Activated T-helper 1 cell treated with anti-CD3 and anti-CD28 coated beads, Interleukin-12 subunit alpha, Interleukin-12 subunit beta, Interleukin-2, Interleukin-4 antibody, amounts not matched to agents 30 ng/mL and 10 ng/mL and 1 ng/mL, durations not matched to agents 14 hours and 24 hours and 36 hours (primary cell): ENCODE measurements at regions of chr17 and their contacts with region 1.

Region 1: DNA sequence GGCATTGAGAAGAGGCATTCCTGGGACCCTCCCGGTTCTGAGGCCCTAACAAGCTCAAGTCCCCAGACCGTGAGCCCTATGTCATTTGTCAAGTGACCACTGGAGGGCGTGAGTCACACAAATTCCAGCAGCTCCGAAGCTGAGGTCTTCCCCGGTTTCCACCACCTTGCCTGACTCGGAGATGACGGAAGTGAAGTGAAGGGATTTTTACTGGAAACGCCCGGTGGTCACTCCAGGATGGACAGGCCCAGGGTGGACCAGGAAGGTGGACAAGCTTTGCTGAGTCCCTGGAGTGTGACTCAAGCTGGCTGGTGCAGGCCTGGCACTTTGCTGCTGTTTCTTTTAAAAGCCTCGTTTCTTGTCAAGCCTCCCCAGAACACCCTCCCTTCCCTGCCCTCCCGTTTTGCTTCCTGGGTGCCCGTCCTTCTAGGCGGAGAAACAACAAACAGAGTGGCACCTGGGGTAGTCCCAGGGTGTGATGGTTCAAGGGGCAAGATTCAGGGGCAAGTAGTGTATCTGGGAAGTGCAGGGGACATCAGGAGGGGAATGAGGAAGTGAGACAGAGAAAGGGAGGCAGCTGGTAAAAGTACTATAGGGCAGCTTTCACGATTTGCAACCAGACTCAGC is 5.3 kb upstream of the NOS2 start:
- DNase-seq: peak; percentile 76
- H3K4me3 Mint-ChIP-seq: peak overlapping the region; percentile 65
- H3K27ac Mint-ChIP-seq: peak overlapping the region; percentile 91
- H3K4me1 Mint-ChIP-seq: peaks cover 40% of the 10 kb centered on the region
- H3K27me3 Mint-ChIP-seq: peaks cover 5% of the 10 kb centered on the region

Region 2: GRCh38 chr17:27236717-27237315 is 568.8 kb before region 1 on chr17:
- intact Hi-C with region 1: loop called (anchors 5 kb)
- DNase-seq: peak; percentile 51
- H3K4me3 Mint-ChIP-seq: no peak overlapping the region
- H3K27ac Mint-ChIP-seq: no peak overlapping the region
- H3K4me1 Mint-ChIP-seq: peaks cover 21% of the 10 kb centered on the region
- H3K27me3 Mint-ChIP-seq: peaks cover 22% of the 10 kb centered on the region

Region 3: DNA sequence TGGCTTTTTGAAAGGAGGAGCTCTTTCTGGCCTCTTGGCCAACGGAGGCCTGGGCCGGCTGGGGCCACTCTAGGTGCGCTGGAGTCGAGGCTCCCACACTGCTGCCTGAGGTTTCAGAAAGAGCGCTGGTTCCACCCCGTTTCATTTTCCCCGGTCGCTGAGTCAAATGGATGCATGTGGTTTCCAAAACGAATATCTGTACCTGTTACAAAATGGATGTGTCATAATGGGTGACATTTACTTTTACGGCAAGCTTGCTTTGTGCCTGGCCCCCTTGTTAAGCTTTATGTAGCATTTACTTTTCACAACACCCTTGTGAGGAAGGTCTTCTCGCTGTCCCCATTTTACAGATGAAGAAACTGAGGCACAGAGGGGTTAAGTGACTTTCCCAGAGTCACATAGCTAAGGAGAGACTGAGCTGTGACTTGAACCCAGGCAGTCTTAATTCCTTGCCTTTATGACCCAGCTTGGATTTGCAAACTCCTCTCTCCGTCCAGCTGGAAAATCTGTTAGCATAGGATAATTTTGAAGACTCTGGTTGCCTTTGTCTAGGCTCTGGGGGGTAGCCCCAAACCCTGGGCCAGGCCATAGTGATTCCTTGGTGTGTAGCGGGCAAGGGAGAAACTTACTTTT is 338.8 kb before region 1 on chr17:
- intact Hi-C with region 1: loop called (anchors 1 kb)
- DNase-seq: peak; percentile 74
- H3K4me3 Mint-ChIP-seq: peak overlapping the region; percentile 79
- H3K27ac Mint-ChIP-seq: peak overlapping the region; percentile 97
- H3K4me1 Mint-ChIP-seq: peaks cover 88% of the 10 kb centered on the region
- H3K27me3 Mint-ChIP-seq: no peaks in the 10 kb centered on the region

Region 4: GRCh38 chr17:27649929-27650328 is 155.7 kb before region 1 on chr17:
- intact Hi-C with region 1: no loop called
- DNase-seq: no peak
- H3K4me3 Mint-ChIP-seq: no peak overlapping the region
- H3K27ac Mint-ChIP-seq: no peak overlapping the region
- H3K4me1 Mint-ChIP-seq: peaks cover 16% of the 10 kb centered on the region
- H3K27me3 Mint-ChIP-seq: no peaks in the 10 kb centered on the region

Region 5: DNA sequence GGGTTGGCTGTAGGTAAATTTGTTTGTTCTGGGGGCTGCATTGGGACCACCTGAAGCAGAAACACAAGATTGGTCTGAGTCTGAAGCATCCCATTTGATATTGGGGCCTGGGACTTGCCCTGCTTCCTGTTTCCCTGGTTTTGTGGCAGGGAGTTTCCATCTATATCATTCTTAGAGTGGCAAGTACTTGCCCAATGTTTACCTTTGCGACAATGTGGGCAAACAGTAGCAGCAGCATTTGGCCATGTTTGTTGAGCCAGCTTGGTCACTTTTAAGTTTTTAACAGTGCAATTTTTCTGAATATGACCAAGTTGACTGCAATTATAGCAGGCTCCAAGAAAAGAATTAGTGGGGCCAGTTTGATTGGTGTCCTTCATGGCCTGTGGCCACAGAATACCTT is 112.9 kb before region 1 on chr17:
- intact Hi-C with region 1: no loop called
- DNase-seq: no peak
- H3K4me3 Mint-ChIP-seq: no peak overlapping the region
- H3K27ac Mint-ChIP-seq: no peak overlapping the region
- H3K4me1 Mint-ChIP-seq: no peaks in the 10 kb centered on the region
- H3K27me3 Mint-ChIP-seq: peaks cover 4% of the 10 kb centered on the region

Region 6: GRCh38 chr17:27834571-27834970 is 28.9 kb after region 1 on chr17:
- intact Hi-C with region 1: no loop called
- DNase-seq: no peak
- H3K4me3 Mint-ChIP-seq: no peak overlapping the region
- H3K27ac Mint-ChIP-seq: no peak overlapping the region
- H3K4me1 Mint-ChIP-seq: no peaks in the 10 kb centered on the region
- H3K27me3 Mint-ChIP-seq: peaks cover 4% of the 10 kb centered on the region

Region 7: GRCh38 chr17:27846042-27846655 is 40.5 kb after region 1 on chr17:
- intact Hi-C with region 1: loop called (anchors 2 kb)
- DNase-seq: peak; percentile 16
- H3K4me3 Mint-ChIP-seq: peak overlapping the region; percentile 79
- H3K27ac Mint-ChIP-seq: peak overlapping the region; percentile 86
- H3K4me1 Mint-ChIP-seq: peaks cover 30% of the 10 kb centered on the region
- H3K27me3 Mint-ChIP-seq: peaks cover 11% of the 10 kb centered on the region

Region 8: GRCh38 chr17:27892866-27893769 is 87.5 kb after region 1 on chr17 and contains the start of gene LYRM9:
- intact Hi-C with region 1: loop called (anchors 1 kb)
- DNase-seq: peak; percentile 92
- H3K4me3 Mint-ChIP-seq: peak within 1 kb of the TSS; percentile 85
- H3K27ac Mint-ChIP-seq: peak within 1 kb of the TSS; percentile 85
- H3K4me1 Mint-ChIP-seq: peaks cover 29% of the 10 kb centered on the region
- H3K27me3 Mint-ChIP-seq: peaks cover 40% of the 10 kb centered on the region
- total RNA-seq, gene LYRM9: 1.9 and 2.9 TPM in 2 replicates

Region 9: GRCh38 chr17:28053044-28053670 is 247.5 kb after region 1 on chr17:
- intact Hi-C with region 1: no loop called
- DNase-seq: no peak
- H3K4me3 Mint-ChIP-seq: no peak overlapping the region
- H3K27ac Mint-ChIP-seq: no peak overlapping the region
- H3K4me1 Mint-ChIP-seq: peaks cover 42% of the 10 kb centered on the region
- H3K27me3 Mint-ChIP-seq: no peaks in the 10 kb centered on the region

Region 10: DNA sequence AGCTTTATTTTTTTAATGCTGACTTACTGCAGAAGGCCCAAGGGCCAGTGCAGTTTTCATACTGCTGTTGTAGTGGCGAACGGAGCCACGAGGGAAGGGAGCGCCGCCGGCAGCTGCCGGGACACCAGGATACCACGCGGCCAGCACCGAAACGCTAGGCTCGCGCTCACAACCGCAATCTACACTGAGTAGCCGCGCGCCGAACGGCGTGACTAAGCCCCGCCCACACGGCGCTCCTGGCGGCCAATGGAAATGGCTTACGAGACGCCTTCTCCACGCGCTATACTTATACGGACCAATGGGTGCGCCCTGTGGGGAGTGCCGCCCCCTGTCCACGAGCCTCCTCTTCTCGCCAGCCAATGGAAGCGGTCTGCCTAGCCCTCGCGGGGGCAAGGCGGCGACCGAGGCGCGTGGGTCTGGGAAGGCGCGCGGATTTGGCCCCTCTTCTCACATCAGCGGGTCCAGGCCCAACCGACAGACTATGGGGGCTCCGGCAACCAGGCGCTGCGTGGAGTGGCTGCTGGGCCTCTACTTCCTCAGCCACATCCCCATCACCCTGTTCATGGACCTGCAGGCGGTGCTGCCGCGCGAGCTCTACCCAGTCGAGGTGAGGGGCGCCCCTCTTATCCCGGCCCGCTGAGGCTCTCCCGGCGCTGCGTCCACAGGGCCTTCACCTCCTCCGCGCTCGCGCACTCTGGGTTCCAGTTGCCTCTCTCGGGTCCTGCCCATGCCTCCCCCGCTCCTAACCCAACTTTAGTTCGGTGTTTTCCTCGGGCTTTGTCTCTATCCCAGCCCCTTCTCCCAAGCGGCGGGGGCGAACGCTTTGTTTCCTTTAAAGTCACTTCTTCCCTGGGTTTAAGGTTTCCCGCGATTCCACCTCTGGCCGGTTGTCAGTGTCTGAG is 513.4 kb after region 1 on chr17 and contains the start of gene TMEM97:
- intact Hi-C with region 1: loop called (anchors 5 kb)
- DNase-seq: peak; percentile 96
- H3K4me3 Mint-ChIP-seq: peak within 1 kb of the TSS; percentile 96
- H3K27ac Mint-ChIP-seq: peak within 1 kb of the TSS; percentile 94
- H3K4me1 Mint-ChIP-seq: peaks cover 48% of the 10 kb centered on the region
- H3K27me3 Mint-ChIP-seq: no peaks in the 10 kb centered on the region
- total RNA-seq, gene TMEM97: 60.9 and 64.5 TPM in 2 replicates